WTC11 (cell line): ENCODE measurements at regions of chr10 and their contacts with region 1.

Region 1: DNA sequence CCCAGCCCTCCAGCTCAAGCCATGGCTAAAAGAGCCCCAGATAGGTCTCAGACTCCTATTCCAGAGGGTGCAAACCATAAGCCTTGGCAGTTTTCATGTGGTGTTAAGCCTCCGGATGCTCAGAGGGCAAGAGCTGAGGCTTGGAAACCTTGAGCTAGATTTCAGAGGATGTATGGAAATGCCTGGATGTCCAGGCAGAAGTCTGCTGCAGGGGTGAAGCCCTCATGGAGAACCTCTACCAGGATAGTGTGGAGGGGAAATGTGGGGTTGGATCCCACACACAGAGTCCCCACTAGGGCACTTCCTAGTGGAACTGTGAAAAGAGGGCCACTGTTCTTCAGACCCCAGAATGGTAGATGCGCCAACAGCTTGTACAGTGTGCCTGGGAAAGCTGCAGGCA is 13.2 kb upstream of the HPSE2 start:
- DNase-seq: no peak
- ATAC-seq: no peak
- H3K4me3 Mint-ChIP-seq: no peak overlapping the region
- H3K27ac Mint-ChIP-seq: no peak overlapping the region
- H3K4me1 Mint-ChIP-seq: no peaks in the 10 kb centered on the region
- H3K27me3 Mint-ChIP-seq: peaks cover 5% of the 10 kb centered on the region
- CTCF ChIP-seq: no peak

Region 2: DNA sequence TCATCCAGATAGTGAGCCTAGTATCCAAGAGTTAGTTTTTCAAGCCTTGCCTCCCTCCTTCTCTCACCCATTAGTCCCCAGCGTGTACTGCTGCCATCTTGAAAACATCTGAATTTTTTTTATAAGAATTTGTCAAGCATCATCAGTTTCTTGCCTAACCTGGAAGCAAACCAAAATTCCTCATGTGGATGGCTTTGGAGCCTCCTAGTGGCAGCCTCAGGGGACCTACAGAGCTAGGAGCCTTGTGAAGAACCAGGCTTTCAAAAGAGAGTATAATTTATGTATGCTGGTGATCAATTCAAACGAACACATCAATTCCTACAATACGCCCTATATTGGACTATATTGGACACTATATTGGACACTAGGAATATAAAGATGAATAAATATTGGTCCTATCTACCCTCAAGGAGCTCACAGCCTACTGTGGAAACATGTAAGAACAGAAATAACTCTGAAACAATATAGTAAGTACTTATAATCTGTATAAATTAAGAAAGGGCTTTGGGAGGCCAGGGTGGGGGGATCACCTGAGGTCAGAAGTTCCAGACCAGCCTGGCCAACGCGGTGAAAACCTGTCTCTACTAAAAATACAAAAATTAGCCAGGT is 76.6 kb before region 1 on chr10:
- CTCF ChIA-PET with region 1: interaction called, 10 read pairs
- POLR2A ChIA-PET with region 1: no interaction called
- DNase-seq: peak; percentile 65
- ATAC-seq: peak; percentile 81
- H3K4me3 Mint-ChIP-seq: no peak overlapping the region
- H3K27ac Mint-ChIP-seq: no peak overlapping the region
- H3K4me1 Mint-ChIP-seq: peaks cover 13% of the 10 kb centered on the region
- H3K27me3 Mint-ChIP-seq: no peaks in the 10 kb centered on the region
- CTCF ChIP-seq: peak; percentile 61

Region 3: GRCh38 chr10:99234041-99234790 is 14.6 kb before region 1 on chr10:
- CTCF ChIA-PET with region 1: interaction called, 14 read pairs
- POLR2A ChIA-PET with region 1: no interaction called
- DNase-seq: peak; percentile 70
- ATAC-seq: peak; percentile 18
- H3K4me3 Mint-ChIP-seq: peak overlapping the region; percentile 74
- H3K27ac Mint-ChIP-seq: no peak overlapping the region
- H3K4me1 Mint-ChIP-seq: peaks cover 46% of the 10 kb centered on the region
- H3K27me3 Mint-ChIP-seq: peaks cover 97% of the 10 kb centered on the region
- CTCF ChIP-seq: no peak

Region 4: DNA sequence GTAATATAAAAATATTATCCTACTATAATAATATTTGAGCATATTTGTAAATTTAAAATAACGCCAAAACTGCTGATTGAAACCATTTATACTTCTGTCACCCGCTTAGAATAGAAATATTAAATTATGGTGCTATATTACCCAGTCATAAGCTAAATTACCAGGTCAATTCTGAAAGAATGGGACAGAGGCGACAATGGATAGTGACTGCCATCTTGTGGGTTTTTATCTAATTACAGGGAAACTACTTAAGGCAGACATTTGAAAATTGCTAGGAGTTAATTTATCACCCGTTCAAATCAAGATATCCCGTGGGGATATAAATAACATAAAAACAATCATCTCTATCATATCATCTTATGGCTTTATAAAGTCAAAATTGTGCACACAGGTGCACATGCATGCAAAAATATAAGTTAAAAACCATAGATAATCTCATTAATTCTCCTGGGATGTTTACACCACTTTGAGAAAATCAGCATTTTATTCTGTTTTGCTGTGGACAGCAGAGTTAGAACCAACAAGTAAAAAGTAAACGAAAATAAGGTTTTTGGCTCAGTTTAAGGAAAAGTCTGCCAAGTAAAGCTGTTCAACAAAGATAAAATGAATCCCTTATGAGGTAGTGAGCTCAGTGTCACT is 28.1 kb after region 1 on chr10:
- CTCF ChIA-PET with region 1: interaction called, 10 read pairs
- POLR2A ChIA-PET with region 1: no interaction called
- DNase-seq: no peak
- ATAC-seq: no peak
- H3K4me3 Mint-ChIP-seq: no peak overlapping the region
- H3K27ac Mint-ChIP-seq: no peak overlapping the region
- H3K4me1 Mint-ChIP-seq: peaks cover 14% of the 10 kb centered on the region
- H3K27me3 Mint-ChIP-seq: no peaks in the 10 kb centered on the region
- CTCF ChIP-seq: peak; percentile 49; the same call in 1 of the 2 replicates